ENCODE measurements at regions of chr12 and their contacts with region 1.

Region 1: GRCh38 chr12:106736051-106736957 is 38.2 kb upstream of the RIC8B start:
- DNase-seq: peak in 12 of 35 experiments; percentile 5 to 59 (median 13)
- ATAC-seq: peak in 3 of 4 experiments; percentile 43 to 76 (median 59)
- H3K4me3 ChIP-seq: no peak overlapping the region
- H3K4me3 Mint-ChIP-seq: no peak overlapping the region
- H3K27ac ChIP-seq: no peak overlapping the region
- H3K27ac Mint-ChIP-seq: no peak overlapping the region
- H3K4me1 ChIP-seq: no peaks in the 10 kb centered on the region
- H3K4me1 Mint-ChIP-seq: peaks cover 5 to 17% (median 7%) of the 10 kb centered on the region in 3 donors
- H3K27me3 ChIP-seq: no peaks in the 10 kb centered on the region
- H3K27me3 Mint-ChIP-seq: peaks cover 0 to 2% of the 10 kb centered on the region in 2 donors

Region 2: DNA sequence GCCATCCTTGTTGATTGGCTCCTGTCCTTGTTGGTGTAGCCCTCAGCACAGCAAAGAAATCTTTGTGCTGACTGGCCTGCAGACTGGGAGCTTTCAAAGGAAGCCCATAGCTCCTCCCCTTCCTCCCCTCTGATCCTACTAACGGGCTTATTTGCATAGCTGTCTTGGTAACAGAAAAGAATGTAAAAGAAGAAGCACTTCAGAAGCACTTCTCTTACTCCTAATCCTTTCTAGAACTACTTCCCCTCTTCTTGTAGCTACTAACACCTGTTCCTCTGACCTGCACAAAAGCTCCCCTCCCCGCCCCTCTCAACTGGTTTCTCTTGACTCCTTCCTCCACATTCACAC is 23.9 kb after region 1 on chr12:
- CTCF ChIA-PET with region 1: no interaction called
- POLR2A ChIA-PET with region 1: no interaction called
- DNase-seq: peak in 15 of 35 experiments; percentile 10 to 61 (median 26)
- ATAC-seq: peak; percentile 87 to 98 (median 96)
- H3K4me3 ChIP-seq: peak overlapping the region in 1 of 2 donors; percentile 1
- H3K4me3 Mint-ChIP-seq: peak overlapping the region; percentile 25 to 79 (median 43)
- H3K27ac ChIP-seq: peak overlapping the region; percentile 65
- H3K27ac Mint-ChIP-seq: peak overlapping the region; percentile 92 to 96
- H3K4me1 ChIP-seq: peaks cover 13 to 15% of the 10 kb centered on the region in 2 experiments
- H3K4me1 Mint-ChIP-seq: peaks cover 27 to 35% (median 31%) of the 10 kb centered on the region in 3 donors
- H3K27me3 ChIP-seq: peaks cover 0 to 6% of the 10 kb centered on the region in 2 experiments
- H3K27me3 Mint-ChIP-seq: no peaks in the 10 kb centered on the region

Region 3: DNA sequence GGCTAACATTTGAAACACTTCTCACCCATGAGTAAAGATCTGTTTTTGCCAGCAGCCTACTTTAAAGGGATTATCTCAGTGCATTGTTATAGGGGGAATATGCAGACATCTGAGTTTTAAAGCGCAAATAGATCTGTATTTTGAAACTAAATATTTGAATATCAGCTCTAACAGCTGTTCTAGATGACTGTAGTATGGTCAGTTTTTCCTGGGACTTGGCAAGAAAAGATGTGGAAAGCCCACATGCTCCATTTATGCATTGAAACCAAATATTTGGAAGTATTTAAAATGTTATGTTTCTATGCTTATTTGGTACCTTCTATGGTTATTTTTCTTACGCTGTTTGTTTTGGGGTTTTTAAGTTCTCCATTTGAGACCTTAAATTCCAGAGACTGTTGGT is 79.9 kb after region 1 on chr12:
- CTCF ChIA-PET with region 1: interaction called in 1 of 2 experiments, 3 read pairs
- POLR2A ChIA-PET with region 1: interaction called in 1 of 2 experiments, 20 read pairs
- DNase-seq: no peak
- ATAC-seq: no peak
- H3K4me3 ChIP-seq: no peak overlapping the region
- H3K4me3 Mint-ChIP-seq: no peak overlapping the region
- H3K27ac ChIP-seq: no peak overlapping the region
- H3K27ac Mint-ChIP-seq: no peak overlapping the region
- H3K4me1 ChIP-seq: no peaks in the 10 kb centered on the region
- H3K4me1 Mint-ChIP-seq: no peaks in the 10 kb centered on the region
- H3K27me3 ChIP-seq: no peaks in the 10 kb centered on the region
- H3K27me3 Mint-ChIP-seq: no peaks in the 10 kb centered on the region